Activated B cell treated with CpG ODN at 0.5 μM for 24 hours (primary cell): ENCODE measurements at regions of chr3 and their contacts with region 1.

Region 1: GRCh38 chr3:10115326-10116137 is at the start of gene BRK1:
- DNase-seq: peak; percentile 85
- ATAC-seq: peak; percentile 96
- H3K4me3 Mint-ChIP-seq: peak within 1 kb of the TSS; percentile 100
- H3K27ac Mint-ChIP-seq: peak within 1 kb of the TSS; percentile 99
- H3K4me1 Mint-ChIP-seq: peaks cover 40% of the 10 kb centered on the region
- H3K27me3 Mint-ChIP-seq: no peaks in the 10 kb centered on the region
- CTCF ChIP-seq: no peak
- total RNA-seq, gene BRK1: 123 and 141 TPM in 2 replicates

Region 2: GRCh38 chr3:10010486-10011465 is 104.8 kb before region 1 on chr3:
- CTCF ChIA-PET with region 1: no interaction called
- POLR2A ChIA-PET with region 1: no interaction called
- intact Hi-C with region 1: loop called (anchors 1 kb)
- DNase-seq: peak; percentile 86
- ATAC-seq: peak; percentile 86
- H3K4me3 Mint-ChIP-seq: peak overlapping the region; percentile 65
- H3K27ac Mint-ChIP-seq: peak overlapping the region; percentile 1
- H3K4me1 Mint-ChIP-seq: peaks cover 23% of the 10 kb centered on the region
- H3K27me3 Mint-ChIP-seq: no peaks in the 10 kb centered on the region
- CTCF ChIP-seq: no peak

Region 3: GRCh38 chr3:10164546-10165393 is 49.2 kb after region 1 on chr3 and contains the start of gene IRAK2:
- CTCF ChIA-PET with region 1: interaction called, 3 read pairs
- POLR2A ChIA-PET with region 1: interaction called, 4 read pairs
- intact Hi-C with region 1: loop called (anchors 2 kb)
- DNase-seq: peak; percentile 65
- ATAC-seq: peak; percentile 91
- H3K4me3 Mint-ChIP-seq: peak within 1 kb of the TSS; percentile 86
- H3K27ac Mint-ChIP-seq: no peak within 1 kb of the TSS
- H3K4me1 Mint-ChIP-seq: peaks cover 38% of the 10 kb centered on the region
- H3K27me3 Mint-ChIP-seq: no peaks in the 10 kb centered on the region
- CTCF ChIP-seq: peak; percentile 64
- total RNA-seq, gene IRAK2: 8.6 and 8.8 TPM in 2 replicates

Region 4: GRCh38 chr3:10224784-10225665 is 109.5 kb after region 1 on chr3:
- CTCF ChIA-PET with region 1: no interaction called
- POLR2A ChIA-PET with region 1: interaction called, 8 read pairs
- intact Hi-C with region 1: loop called (anchors 1 kb)
- DNase-seq: peak; percentile 32
- ATAC-seq: peak; percentile 63
- H3K4me3 Mint-ChIP-seq: peak overlapping the region; percentile 48
- H3K27ac Mint-ChIP-seq: peak overlapping the region; percentile 61
- H3K4me1 Mint-ChIP-seq: peaks cover 65% of the 10 kb centered on the region
- H3K27me3 Mint-ChIP-seq: no peaks in the 10 kb centered on the region
- CTCF ChIP-seq: peak; percentile 85

Region 5: GRCh38 chr3:10322352-10322710 is 206.8 kb after region 1 on chr3:
- CTCF ChIA-PET with region 1: no interaction called
- POLR2A ChIA-PET with region 1: interaction called, 4 read pairs
- intact Hi-C with region 1: loop called (anchors 1 kb)
- DNase-seq: no peak
- ATAC-seq: no peak
- H3K4me3 Mint-ChIP-seq: no peak overlapping the region
- H3K27ac Mint-ChIP-seq: no peak overlapping the region
- H3K4me1 Mint-ChIP-seq: peaks cover 31% of the 10 kb centered on the region
- H3K27me3 Mint-ChIP-seq: peaks cover 9% of the 10 kb centered on the region
- CTCF ChIP-seq: no peak

Region 6: GRCh38 chr3:10614168-10614567 is 498.6 kb after region 1 on chr3:
- CTCF ChIA-PET with region 1: no interaction called
- POLR2A ChIA-PET with region 1: no interaction called
- intact Hi-C with region 1: no loop called
- DNase-seq: no peak
- ATAC-seq: no peak
- H3K4me3 Mint-ChIP-seq: no peak overlapping the region
- H3K27ac Mint-ChIP-seq: no peak overlapping the region
- H3K4me1 Mint-ChIP-seq: no peaks in the 10 kb centered on the region
- H3K27me3 Mint-ChIP-seq: no peaks in the 10 kb centered on the region
- CTCF ChIP-seq: no peak

Region 7: GRCh38 chr3:10933805-10934481 is 818.4 kb after region 1 on chr3:
- CTCF ChIA-PET with region 1: no interaction called
- POLR2A ChIA-PET with region 1: no interaction called
- intact Hi-C with region 1: no loop called
- DNase-seq: no peak
- ATAC-seq: no peak
- H3K4me3 Mint-ChIP-seq: no peak overlapping the region
- H3K27ac Mint-ChIP-seq: no peak overlapping the region
- H3K4me1 Mint-ChIP-seq: no peaks in the 10 kb centered on the region
- H3K27me3 Mint-ChIP-seq: peaks cover 7% of the 10 kb centered on the region
- CTCF ChIP-seq: no peak